Gastrocnemius medialis (tissue), 4 donors: ENCODE measurements at regions of chr12 and their contacts with region 1.

Region 1: DNA sequence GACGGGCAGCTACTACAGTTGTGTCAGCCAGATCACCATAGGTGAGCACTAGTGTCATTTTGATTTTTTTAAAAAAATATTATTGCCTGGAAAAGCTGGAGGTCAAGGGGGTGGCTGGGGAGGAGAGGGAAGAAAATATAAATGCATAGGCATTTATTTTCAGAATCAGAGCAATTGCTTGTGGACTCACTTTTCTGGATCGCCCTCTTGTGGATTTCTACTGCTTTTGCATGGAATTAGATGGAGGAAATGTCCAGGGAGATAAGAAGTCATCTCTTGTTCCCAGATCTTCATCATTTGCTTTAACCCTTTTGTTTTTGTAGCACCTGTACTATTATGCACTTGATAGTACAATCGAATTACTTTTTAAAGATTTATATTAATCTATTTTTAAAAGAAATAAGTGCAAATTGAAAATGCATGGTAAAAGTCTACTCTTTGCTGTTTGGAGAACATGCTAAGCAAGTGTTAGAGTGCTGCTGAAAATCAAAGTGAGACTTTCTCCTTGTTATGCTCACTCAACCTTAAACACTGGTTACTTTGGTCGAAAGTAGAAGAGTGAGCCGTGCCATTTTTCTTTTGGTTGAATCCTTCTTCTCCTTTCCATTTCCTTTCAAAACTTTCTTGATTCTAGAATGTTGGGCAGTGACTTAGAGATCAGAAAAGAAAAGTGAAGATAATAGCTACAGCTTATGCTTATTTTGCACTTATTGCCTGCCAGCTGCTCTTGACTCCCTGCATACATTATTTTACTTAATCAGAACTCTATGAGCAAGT is 60.6 kb upstream of the ANO4 start:
- DNase-seq: no peak
- ATAC-seq: no peak
- H3K4me3 ChIP-seq: no peak overlapping the region
- H3K27ac ChIP-seq: no peak overlapping the region
- H3K4me1 ChIP-seq: no peaks in the 10 kb centered on the region
- H3K27me3 ChIP-seq: no peaks in the 10 kb centered on the region
- CTCF ChIP-seq: no peak
- POLR2A ChIP-seq: no peak

Region 2: GRCh38 chr12:100348657-100349454 is 385.1 kb before region 1 on chr12:
- in situ Hi-C with region 1: no loop called
- intact Hi-C with region 1: loop called (anchors 10 kb)
- DNase-seq: no peak
- ATAC-seq: no peak
- H3K4me3 ChIP-seq: no peak overlapping the region
- H3K27ac ChIP-seq: no peak overlapping the region
- H3K4me1 ChIP-seq: no peaks in the 10 kb centered on the region
- H3K27me3 ChIP-seq: no peaks in the 10 kb centered on the region
- CTCF ChIP-seq: peak in 3 of 5 experiments; percentile 20 to 27 (median 25)
- POLR2A ChIP-seq: no peak

Region 3: GRCh38 chr12:100681074-100681473 is 52.9 kb before region 1 on chr12:
- in situ Hi-C with region 1: no loop called
- intact Hi-C with region 1: no loop called
- DNase-seq: no peak
- ATAC-seq: no peak
- H3K4me3 ChIP-seq: no peak overlapping the region
- H3K27ac ChIP-seq: no peak overlapping the region
- H3K4me1 ChIP-seq: no peaks in the 10 kb centered on the region
- H3K27me3 ChIP-seq: no peaks in the 10 kb centered on the region
- CTCF ChIP-seq: no peak
- POLR2A ChIP-seq: no peak